Activated T-helper 2 cell treated with anti-CD3 and anti-CD28 coated beads, Interferon-gamma antibody, Interleukin-2, Interleukin-4, amounts not matched to agents 10 μg/mL and 5 μg/mL and 100 μg/mL, durations not matched to agents 14 hours and 24 hours and 36 hours (primary cell): ENCODE measurements at regions of chr2 and their contacts with region 1.

Region 1: GRCh38 chr2:190849774-190850173 is 30.8 kb upstream of the GLS start:
- DNase-seq: no peak
- H3K4me3 Mint-ChIP-seq: no peak overlapping the region
- H3K27ac Mint-ChIP-seq: no peak overlapping the region
- H3K4me1 Mint-ChIP-seq: peaks cover 17% of the 10 kb centered on the region
- H3K27me3 Mint-ChIP-seq: no peaks in the 10 kb centered on the region

Region 2: GRCh38 chr2:190746971-190747761 is 102.6 kb before region 1 on chr2:
- intact Hi-C with region 1: no loop called
- DNase-seq: no peak
- H3K4me3 Mint-ChIP-seq: no peak overlapping the region
- H3K27ac Mint-ChIP-seq: no peak overlapping the region
- H3K4me1 Mint-ChIP-seq: peaks cover 19% of the 10 kb centered on the region
- H3K27me3 Mint-ChIP-seq: no peaks in the 10 kb centered on the region

Region 3: GRCh38 chr2:190947711-190948251 is 98.0 kb after region 1 on chr2:
- intact Hi-C with region 1: loop called (anchors 5 kb)
- DNase-seq: no peak
- H3K4me3 Mint-ChIP-seq: no peak overlapping the region
- H3K27ac Mint-ChIP-seq: peak overlapping the region; percentile 23
- H3K4me1 Mint-ChIP-seq: peaks cover 16% of the 10 kb centered on the region
- H3K27me3 Mint-ChIP-seq: no peaks in the 10 kb centered on the region